CD4-positive, alpha-beta T cell (primary cell): ENCODE measurements at regions of chr17 and their contacts with region 1.

Region 1: DNA sequence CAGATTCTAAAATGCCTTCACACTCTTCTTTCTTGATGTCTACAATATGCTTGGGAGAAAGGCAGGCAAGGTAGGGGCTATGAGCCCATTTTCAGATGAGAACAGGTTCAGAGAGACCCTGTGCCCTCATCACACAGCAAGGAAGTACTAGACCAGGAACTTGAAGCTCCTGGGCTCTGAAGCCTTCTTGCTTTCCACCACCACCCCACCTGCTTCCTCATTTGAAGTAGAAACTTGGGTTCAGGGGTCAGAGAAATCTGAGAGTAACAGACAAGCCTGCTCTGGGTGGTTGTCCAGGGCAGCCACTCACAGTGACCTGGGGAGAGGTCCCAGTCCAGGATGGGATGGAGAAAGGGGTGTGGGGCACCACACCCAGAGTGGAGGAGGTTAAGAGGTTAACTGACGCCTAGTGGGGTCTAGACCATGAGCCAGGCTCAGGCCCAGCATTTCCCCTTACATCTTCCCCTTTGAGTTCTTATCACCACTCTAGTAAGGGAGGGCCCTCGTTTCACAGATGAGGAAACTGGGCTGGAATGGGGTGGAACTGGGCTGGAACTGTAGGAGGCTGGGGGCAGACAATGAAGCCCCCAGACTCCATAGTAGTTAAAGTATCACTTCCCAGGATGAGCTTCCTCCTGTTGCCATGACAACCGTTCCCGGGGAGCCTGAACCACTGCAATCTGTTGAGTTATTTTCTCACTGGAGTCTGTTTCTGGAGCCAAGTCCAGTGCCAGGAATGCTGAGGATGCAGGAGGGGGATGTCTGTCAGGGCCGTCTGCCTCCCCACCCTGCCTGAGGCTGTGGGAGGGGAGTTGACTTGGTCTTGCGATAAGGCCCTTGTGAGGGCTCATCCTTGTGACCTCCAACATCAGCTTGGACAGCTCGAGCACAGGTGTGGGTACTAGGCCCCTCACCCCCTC is 16.2 kb upstream of the PHF12 start:
- DNase-seq: peak in 1 of 14 experiments; percentile 10
- ATAC-seq: no peak
- H3K4me3 ChIP-seq: no peak overlapping the region
- H3K4me3 Mint-ChIP-seq: no peak overlapping the region
- H3K27ac ChIP-seq: no peak overlapping the region
- H3K27ac Mint-ChIP-seq: no peak overlapping the region
- H3K4me1 ChIP-seq: peaks cover 3% of the 10 kb centered on the region
- H3K4me1 Mint-ChIP-seq: no peaks in the 10 kb centered on the region
- H3K27me3 ChIP-seq: peaks cover 0 to 5% of the 10 kb centered on the region in 2 experiments
- H3K27me3 Mint-ChIP-seq: peaks cover 9% of the 10 kb centered on the region
- CTCF ChIP-seq: no peak

Region 2: DNA sequence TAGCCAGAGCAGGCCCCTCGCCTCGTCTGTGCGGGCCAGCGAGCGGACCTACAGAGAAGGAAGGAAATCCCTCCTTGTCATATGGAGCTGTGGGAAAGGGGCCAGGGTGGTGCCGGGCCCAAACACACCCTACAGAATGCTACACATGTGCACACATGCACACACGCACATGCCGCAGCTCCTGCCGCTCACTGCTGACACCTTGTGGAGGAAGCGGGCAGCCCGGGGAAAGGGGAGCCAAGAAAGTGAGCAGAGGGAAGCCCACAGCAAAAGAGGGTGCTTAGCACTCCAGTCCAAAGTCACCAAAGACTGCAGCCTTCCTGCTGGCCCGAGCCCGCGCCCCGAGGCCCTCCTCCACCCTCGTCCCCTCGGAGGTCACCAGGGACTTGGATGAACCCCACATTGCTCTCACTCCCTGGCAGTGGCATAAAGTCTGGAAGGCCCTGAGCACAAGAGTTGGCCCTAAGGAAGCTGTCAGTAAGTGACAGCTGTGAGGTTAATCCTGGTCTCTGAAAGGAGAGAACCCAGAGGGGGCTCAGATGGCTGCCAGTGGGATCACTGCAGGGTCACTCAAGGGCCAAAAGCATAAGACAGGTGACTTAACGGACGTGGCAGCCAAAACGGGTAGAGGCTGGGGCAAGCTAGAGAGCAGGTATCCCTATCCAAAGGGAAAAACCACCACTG is 144.5 kb after region 1 on chr17:
- CTCF ChIA-PET with region 1: interaction called, 36 read pairs
- POLR2A ChIA-PET with region 1: interaction called, 13 read pairs
- intact Hi-C with region 1: loop called (anchors 1 kb)
- DNase-seq: peak; percentile 37 to 76 (median 62)
- ATAC-seq: peak; percentile 85
- H3K4me3 ChIP-seq: no peak overlapping the region
- H3K4me3 Mint-ChIP-seq: no peak overlapping the region
- H3K27ac ChIP-seq: no peak overlapping the region
- H3K27ac Mint-ChIP-seq: no peak overlapping the region
- H3K4me1 ChIP-seq: peaks cover 4% of the 10 kb centered on the region
- H3K4me1 Mint-ChIP-seq: peaks cover 5% of the 10 kb centered on the region
- H3K27me3 ChIP-seq: no peaks in the 10 kb centered on the region
- H3K27me3 Mint-ChIP-seq: no peaks in the 10 kb centered on the region
- CTCF ChIP-seq: peak; percentile 63

Region 3: GRCh38 chr17:29180034-29180787 is 212.7 kb after region 1 on chr17 and contains the start of gene MYO18A:
- CTCF ChIA-PET with region 1: no interaction called
- POLR2A ChIA-PET with region 1: no interaction called
- intact Hi-C with region 1: loop called in 1 of 2 experiments (anchors 10 kb)
- DNase-seq: peak; percentile 53 to 90 (median 76)
- ATAC-seq: peak; percentile 91
- H3K4me3 ChIP-seq: peak within 1 kb of the TSS; percentile 21
- H3K4me3 Mint-ChIP-seq: peak within 1 kb of the TSS; percentile 75
- H3K27ac ChIP-seq: no peak within 1 kb of the TSS
- H3K27ac Mint-ChIP-seq: no peak within 1 kb of the TSS
- H3K4me1 ChIP-seq: peaks cover 45% of the 10 kb centered on the region
- H3K4me1 Mint-ChIP-seq: peaks cover 34% of the 10 kb centered on the region
- H3K27me3 ChIP-seq: no peaks in the 10 kb centered on the region
- H3K27me3 Mint-ChIP-seq: no peaks in the 10 kb centered on the region
- CTCF ChIP-seq: peak; percentile 75
- total RNA-seq, gene MYO18A: 87.0 to 90.1 TPM